HEK293 (cell line): ENCODE measurements at regions of chr11 and their contacts with region 1.

Region 1: GRCh38 chr11:47578524-47579460 is at the starts of genes KBTBD4 and NDUFS3:
- H3K4me3 ChIP-seq: peak within 1 kb of the TSS; percentile 100
- H3K27ac ChIP-seq: peak within 1 kb of the TSS; percentile 51; the same call in 1 of the 2 replicates
- H3K4me1 ChIP-seq: no peaks in the 10 kb centered on the region
- CTCF ChIP-seq: peak; percentile 28

Region 2: GRCh38 chr11:47565340-47566148 is 13.2 kb before region 1 on chr11 and contains the start of gene PTPMT1:
- CTCF ChIA-PET with region 1: interaction called, 4 read pairs
- POLR2A ChIA-PET with region 1: interaction called, 31 read pairs
- H3K4me3 ChIP-seq: peak within 1 kb of the TSS; percentile 80
- H3K27ac ChIP-seq: peak within 1 kb of the TSS; percentile 93
- H3K4me1 ChIP-seq: no peaks in the 10 kb centered on the region
- CTCF ChIP-seq: no peak

Region 3: GRCh38 chr11:47642099-47642855 is 63.5 kb after region 1 on chr11 and contains the start of gene MTCH2:
- CTCF ChIA-PET with region 1: no interaction called
- POLR2A ChIA-PET with region 1: no interaction called
- H3K4me3 ChIP-seq: peak within 1 kb of the TSS; percentile 93
- H3K27ac ChIP-seq: peak within 1 kb of the TSS; percentile 87
- H3K4me1 ChIP-seq: no peaks in the 10 kb centered on the region
- CTCF ChIP-seq: peak; percentile 67; the same call in 1 of the 2 replicates